Activated CD8-positive, alpha-beta memory T cell treated with anti-CD3 and anti-CD28 coated beads, Interleukin-2, amount 10 ng/mL, durations not matched to agents 7 days and 5 days (primary cell): ENCODE measurements at regions of chr2 and their contacts with region 1.

Region 1: GRCh38 chr2:233404222-233404621 is 49.9 kb downstream of the DGKD start:
- DNase-seq: peak; percentile 78
- ATAC-seq: peak; percentile 71
- H3K4me3 Mint-ChIP-seq: no peak overlapping the region
- H3K27ac Mint-ChIP-seq: peak overlapping the region; percentile 27
- H3K4me1 Mint-ChIP-seq: peaks cover 50% of the 10 kb centered on the region
- H3K27me3 Mint-ChIP-seq: no peaks in the 10 kb centered on the region

Region 2: GRCh38 chr2:233387667-233388528 is 16.3 kb before region 1 on chr2:
- CTCF ChIA-PET with region 1: interaction called, 13 read pairs
- DNase-seq: no peak
- ATAC-seq: no peak
- H3K4me3 Mint-ChIP-seq: no peak overlapping the region
- H3K27ac Mint-ChIP-seq: no peak overlapping the region
- H3K4me1 Mint-ChIP-seq: peaks cover 56% of the 10 kb centered on the region
- H3K27me3 Mint-ChIP-seq: no peaks in the 10 kb centered on the region

Region 3: GRCh38 chr2:233418761-233419625 is 14.8 kb after region 1 on chr2:
- CTCF ChIA-PET with region 1: interaction called, 145 read pairs
- DNase-seq: peak; percentile 72
- ATAC-seq: peak; percentile 44
- H3K4me3 Mint-ChIP-seq: peak overlapping the region; percentile 69
- H3K27ac Mint-ChIP-seq: peak overlapping the region; percentile 92
- H3K4me1 Mint-ChIP-seq: peaks cover 91% of the 10 kb centered on the region
- H3K27me3 Mint-ChIP-seq: no peaks in the 10 kb centered on the region